ENCODE measurements at regions of chr10 and their contacts with region 1.

Region 1: GRCh38 chr10:5446390-5446926 is 34.1 kb downstream of the NET1 start:
- DNase-seq: peak; percentile 92
- H3K4me3 ChIP-seq: peak overlapping the region; percentile 42
- H3K27ac ChIP-seq: peak overlapping the region; percentile 59
- H3K4me1 ChIP-seq: peaks cover 16% of the 10 kb centered on the region
- H3K27me3 ChIP-seq: no peaks in the 10 kb centered on the region
- CTCF ChIP-seq: no peak

Region 2: DNA sequence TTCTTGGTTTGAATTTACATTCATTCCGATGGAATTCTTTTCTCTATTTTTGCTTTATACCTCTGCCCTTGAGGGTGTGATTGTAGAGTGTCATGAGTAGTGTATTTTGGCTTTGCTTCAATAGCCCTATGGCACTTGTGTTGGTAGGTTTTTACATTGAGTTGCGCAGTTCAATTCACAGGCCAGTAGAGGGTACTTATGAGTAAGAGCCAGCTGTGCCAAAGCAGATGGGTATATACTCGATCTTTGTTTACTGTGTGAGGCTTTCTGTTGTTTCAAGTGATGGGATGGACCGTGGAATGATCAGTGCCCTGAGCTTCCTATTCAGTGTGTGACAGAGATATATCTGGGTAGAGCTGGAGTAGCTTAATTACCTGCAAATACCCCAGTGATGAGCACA is 356.6 kb before region 1 on chr10:
- CTCF ChIA-PET with region 1: no interaction called
- POLR2A ChIA-PET with region 1: no interaction called
- intact Hi-C with region 1: no loop called
- DNase-seq: peak; percentile 64
- H3K4me3 ChIP-seq: no peak overlapping the region
- H3K27ac ChIP-seq: no peak overlapping the region
- H3K4me1 ChIP-seq: peaks cover 4% of the 10 kb centered on the region
- H3K27me3 ChIP-seq: no peaks in the 10 kb centered on the region
- CTCF ChIP-seq: peak; percentile 43

Region 3: GRCh38 chr10:5604209-5605039 is 158.0 kb after region 1 on chr10:
- CTCF ChIA-PET with region 1: no interaction called
- POLR2A ChIA-PET with region 1: interaction called, 11 read pairs
- intact Hi-C with region 1: no loop called
- DNase-seq: peak; percentile 39
- H3K4me3 ChIP-seq: no peak overlapping the region
- H3K27ac ChIP-seq: no peak overlapping the region
- H3K4me1 ChIP-seq: no peaks in the 10 kb centered on the region
- H3K27me3 ChIP-seq: no peaks in the 10 kb centered on the region
- CTCF ChIP-seq: no peak

Region 4: DNA sequence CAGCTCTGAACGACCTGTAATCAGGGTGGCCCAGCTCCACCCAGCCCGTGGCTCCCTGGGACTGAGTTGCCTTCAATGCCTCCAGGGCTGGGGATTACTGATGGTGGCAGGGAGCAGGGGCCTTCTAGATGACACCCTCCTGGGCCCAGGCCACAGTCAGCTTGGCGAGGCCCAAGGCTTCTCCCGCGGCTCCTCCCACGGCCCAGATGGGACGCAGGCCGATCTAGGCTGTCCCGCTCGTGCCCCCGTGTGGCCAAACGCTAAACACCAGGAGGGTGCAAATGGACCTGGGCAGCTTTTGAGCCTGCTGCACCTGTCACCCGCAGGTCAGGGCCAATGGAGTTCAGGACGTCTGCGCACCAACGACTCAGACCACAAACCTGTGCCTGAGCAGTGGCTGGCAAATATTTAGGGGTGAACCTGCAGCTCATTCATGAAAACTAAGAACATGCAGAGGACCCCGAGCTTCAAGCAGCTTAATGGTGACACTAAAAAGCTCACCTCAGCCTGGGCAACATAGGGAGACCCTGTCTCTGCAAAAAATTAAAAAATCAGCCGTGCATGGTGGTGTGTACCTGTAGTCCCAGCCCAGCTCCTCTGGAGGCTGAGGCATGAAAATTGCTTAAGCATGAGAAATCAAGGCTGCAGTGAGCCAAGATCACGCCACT is 176.8 kb after region 1 on chr10:
- CTCF ChIA-PET with region 1: interaction called, 14 read pairs
- POLR2A ChIA-PET with region 1: no interaction called
- intact Hi-C with region 1: loop called (anchors 5 kb)
- DNase-seq: peak; percentile 90
- H3K4me3 ChIP-seq: no peak overlapping the region
- H3K27ac ChIP-seq: no peak overlapping the region
- H3K4me1 ChIP-seq: no peaks in the 10 kb centered on the region
- H3K27me3 ChIP-seq: no peaks in the 10 kb centered on the region
- CTCF ChIP-seq: peak; percentile 93